Natural killer cell (primary cell): ENCODE measurements at regions of chr10 and their contacts with region 1.

Region 1: DNA sequence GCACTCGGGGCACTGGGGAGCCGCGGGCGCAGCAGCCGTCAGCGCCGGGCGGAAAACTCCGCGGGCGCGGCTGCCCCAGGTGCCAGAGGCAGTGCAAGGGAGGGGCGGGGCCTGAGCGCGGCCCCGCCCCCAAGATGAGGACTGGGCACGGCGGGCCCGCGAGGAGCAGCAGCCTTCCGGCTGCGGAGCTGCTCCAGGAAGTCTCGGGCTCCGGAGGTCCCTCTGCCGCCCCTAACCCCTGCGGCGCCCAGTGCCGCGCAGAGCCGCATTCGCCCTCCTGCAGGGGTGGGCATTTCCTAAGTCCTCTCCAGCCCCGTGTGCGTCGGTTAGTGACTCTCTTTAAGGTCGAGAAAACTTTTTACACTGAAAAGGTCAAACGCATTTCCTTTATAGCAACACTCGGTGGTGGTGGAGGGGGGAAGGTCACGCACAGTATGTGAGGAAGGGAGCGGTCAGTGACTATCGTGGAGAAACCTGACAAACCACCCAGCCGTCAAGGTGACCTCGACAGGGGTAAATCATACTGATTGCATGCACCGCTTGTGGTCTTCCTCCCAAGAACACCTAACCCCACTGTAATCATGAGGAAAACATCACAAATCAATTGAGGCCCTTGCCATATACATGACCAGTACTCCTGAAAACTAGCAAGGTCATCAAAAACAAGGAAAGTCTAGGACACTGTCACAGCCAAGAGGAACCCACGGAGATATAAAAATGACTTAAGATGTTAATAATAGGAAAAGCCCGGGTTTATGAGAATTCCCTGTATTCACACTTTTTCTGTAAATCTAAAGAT is at the start of gene ANXA11:
- DNase-seq: peak; percentile 73 to 93
- ATAC-seq: peak; percentile 81 to 91 (median 85)
- H3K4me3 ChIP-seq: peak within 1 kb of the TSS; percentile 61
- H3K4me3 Mint-ChIP-seq: peak within 1 kb of the TSS; percentile 88
- H3K27ac ChIP-seq: peak within 1 kb of the TSS; percentile 73
- H3K27ac Mint-ChIP-seq: peak within 1 kb of the TSS; percentile 83 to 93
- H3K4me1 ChIP-seq: peaks cover 48% of the 10 kb centered on the region
- H3K4me1 Mint-ChIP-seq: peaks cover 50 to 52% of the 10 kb centered on the region in 2 donors
- H3K27me3 ChIP-seq: no peaks in the 10 kb centered on the region
- H3K27me3 Mint-ChIP-seq: peaks cover 0 to 3% of the 10 kb centered on the region in 2 donors
- CTCF ChIP-seq: no peak
- total RNA-seq, gene ANXA11: 213 to 264 (median 245) TPM

Region 2: DNA sequence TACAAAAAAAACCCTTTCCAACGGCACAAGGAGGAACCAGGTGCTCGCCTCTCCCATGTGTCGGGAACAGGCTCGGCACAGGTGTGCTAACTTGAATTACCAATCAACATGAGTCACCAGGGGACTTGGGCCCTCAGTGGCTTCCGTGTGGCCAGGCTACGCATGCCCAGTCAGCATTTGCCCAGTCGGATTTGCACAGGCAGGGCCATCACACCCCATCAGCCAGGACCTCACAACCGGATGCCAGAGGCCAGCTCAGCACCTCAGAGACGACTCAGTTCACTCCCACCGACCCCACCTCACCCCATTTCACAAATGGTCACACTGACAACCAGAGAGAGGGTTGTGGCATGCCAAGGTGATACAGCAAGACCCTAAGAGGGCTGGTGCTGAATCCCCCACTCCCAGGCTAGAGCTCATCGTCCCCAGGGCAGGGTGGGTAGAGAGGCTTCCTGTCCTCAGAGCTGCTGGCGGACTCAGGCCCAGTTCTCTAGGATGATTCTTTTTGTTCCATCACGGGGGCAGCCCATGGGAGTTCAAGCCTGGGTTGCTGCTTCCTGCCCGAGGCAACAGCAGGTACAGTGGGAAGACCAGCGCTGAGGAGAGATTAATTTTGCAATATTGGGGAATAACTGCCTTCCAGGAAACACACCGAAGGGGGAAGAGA is 14.0 kb before region 1 on chr10:
- intact Hi-C with region 1: loop called (anchors 1 kb)
- DNase-seq: peak; percentile 53 to 71
- ATAC-seq: peak; percentile 62 to 68 (median 62)
- H3K4me3 ChIP-seq: no peak overlapping the region
- H3K4me3 Mint-ChIP-seq: peak overlapping the region; percentile 77
- H3K27ac ChIP-seq: peak overlapping the region; percentile 69
- H3K27ac Mint-ChIP-seq: peak overlapping the region; percentile 82 to 87
- H3K4me1 ChIP-seq: peaks cover 75% of the 10 kb centered on the region
- H3K4me1 Mint-ChIP-seq: peaks cover 66 to 77% of the 10 kb centered on the region in 2 donors
- H3K27me3 ChIP-seq: no peaks in the 10 kb centered on the region
- H3K27me3 Mint-ChIP-seq: no peaks in the 10 kb centered on the region
- CTCF ChIP-seq: no peak

Region 3: GRCh38 chr10:80498833-80499741 is 293.4 kb after region 1 on chr10:
- intact Hi-C with region 1: loop called (anchors 10 kb)
- DNase-seq: peak; percentile 60 to 68
- ATAC-seq: peak; percentile 78 to 85 (median 81)
- H3K4me3 ChIP-seq: no peak overlapping the region
- H3K4me3 Mint-ChIP-seq: peak overlapping the region; percentile 75
- H3K27ac ChIP-seq: peak overlapping the region; percentile 77
- H3K27ac Mint-ChIP-seq: peak overlapping the region; percentile 75 to 81
- H3K4me1 ChIP-seq: peaks cover 89% of the 10 kb centered on the region
- H3K4me1 Mint-ChIP-seq: peaks cover 96 to 98% of the 10 kb centered on the region in 2 donors
- H3K27me3 ChIP-seq: no peaks in the 10 kb centered on the region
- H3K27me3 Mint-ChIP-seq: no peaks in the 10 kb centered on the region
- CTCF ChIP-seq: no peak